ENCODE measurements at regions of chr19 and their contacts with region 1.

Region 1: DNA sequence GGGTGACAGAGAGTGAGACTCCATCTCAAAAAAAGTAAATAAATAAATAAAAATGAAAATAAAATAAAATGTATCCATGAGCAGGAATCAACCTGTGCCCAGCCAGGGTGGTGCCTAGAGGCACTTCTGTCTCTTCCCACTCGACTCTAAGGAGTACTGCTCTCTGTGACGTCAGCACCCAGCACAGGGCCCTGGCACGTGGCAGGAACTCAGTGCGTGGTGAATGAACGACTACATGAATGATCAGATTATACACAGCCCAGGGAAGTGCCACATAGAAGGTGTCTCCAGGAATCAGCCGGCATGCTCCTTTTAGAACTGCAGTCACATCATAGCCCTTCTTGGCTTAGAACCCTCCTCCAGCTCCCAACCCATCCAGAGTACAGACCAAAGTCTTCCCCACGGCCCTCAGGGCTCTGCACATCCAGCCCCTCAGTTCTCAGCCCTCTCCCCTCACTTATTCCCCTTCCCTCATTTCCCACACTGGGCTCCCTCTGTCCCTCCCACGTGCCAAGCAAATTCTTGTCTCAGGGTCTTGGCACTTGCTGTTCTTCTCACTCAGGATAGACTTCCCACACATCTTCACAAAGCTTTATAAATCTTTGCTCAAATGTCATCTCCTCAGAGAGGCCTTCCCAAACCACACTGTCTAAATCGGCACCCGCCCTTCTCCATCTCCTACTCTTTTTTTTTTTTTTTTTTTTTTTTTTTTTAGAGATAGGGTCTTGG is 4.2 kb downstream of the CLIP3 start:
- DNase-seq: no peak
- H3K4me3 Mint-ChIP-seq: no peak overlapping the region
- H3K27ac Mint-ChIP-seq: no peak overlapping the region
- H3K4me1 Mint-ChIP-seq: peaks cover 6% of the 10 kb centered on the region
- H3K27me3 Mint-ChIP-seq: no peaks in the 10 kb centered on the region

Region 2: GRCh38 chr19:36043952-36044351 is 15.5 kb after region 1 on chr19:
- CTCF ChIA-PET with region 1: no interaction called
- intact Hi-C with region 1: loop called (anchors 1 kb)
- DNase-seq: no peak
- H3K4me3 Mint-ChIP-seq: no peak overlapping the region
- H3K27ac Mint-ChIP-seq: no peak overlapping the region
- H3K4me1 Mint-ChIP-seq: no peaks in the 10 kb centered on the region
- H3K27me3 Mint-ChIP-seq: no peaks in the 10 kb centered on the region

Measured in activated naive CD4-positive, alpha-beta T cell treated with anti-CD3 and anti-CD28 coated beads for 36 hours (primary cell).